ENCODE measurements at regions of chr15 and their contacts with region 1.

Region 1: GRCh38 chr15:78396976-78397375 is 41.0 kb upstream of the IREB2 start:
- DNase-seq: peak in 1 of 2 donors; percentile 33
- ATAC-seq: peak in 3 of 8 donors; percentile 22 to 74 (median 70)
- H3K4me3 ChIP-seq: no peak overlapping the region
- H3K27ac ChIP-seq: no peak overlapping the region
- H3K4me1 ChIP-seq: peaks cover 0 to 6% (median 0%) of the 10 kb centered on the region in 9 donors
- H3K27me3 ChIP-seq: peaks cover 0 to 26% (median 9%) of the 10 kb centered on the region in 7 donors
- CTCF ChIP-seq: peak in 5 of 9 donors; percentile 13 to 32 (median 24)

Region 2: GRCh38 chr15:78212546-78213424 is 184.2 kb before region 1 on chr15:
- intact Hi-C with region 1: no loop called
- DNase-seq: peak; percentile 58 to 66
- ATAC-seq: peak in 6 of 8 donors; percentile 71 to 85 (median 75)
- H3K4me3 ChIP-seq: no peak overlapping the region
- H3K27ac ChIP-seq: peak overlapping the region in 6 of 10 donors; percentile 10 to 57 (median 35)
- H3K4me1 ChIP-seq: peaks cover 2 to 59% (median 35%) of the 10 kb centered on the region in 9 donors
- H3K27me3 ChIP-seq: peaks cover 0 to 9% (median 0%) of the 10 kb centered on the region in 7 donors
- CTCF ChIP-seq: no peak

Region 3: GRCh38 chr15:78315686-78316282 is 81.2 kb before region 1 on chr15:
- intact Hi-C with region 1: no loop called
- DNase-seq: no peak
- ATAC-seq: peak in 1 of 8 donors; percentile 21
- H3K4me3 ChIP-seq: no peak overlapping the region
- H3K27ac ChIP-seq: no peak overlapping the region
- H3K4me1 ChIP-seq: peaks cover 0 to 5% (median 0%) of the 10 kb centered on the region in 9 donors
- H3K27me3 ChIP-seq: peaks cover 0 to 4% (median 0%) of the 10 kb centered on the region in 7 donors
- CTCF ChIP-seq: no peak

Region 4: DNA sequence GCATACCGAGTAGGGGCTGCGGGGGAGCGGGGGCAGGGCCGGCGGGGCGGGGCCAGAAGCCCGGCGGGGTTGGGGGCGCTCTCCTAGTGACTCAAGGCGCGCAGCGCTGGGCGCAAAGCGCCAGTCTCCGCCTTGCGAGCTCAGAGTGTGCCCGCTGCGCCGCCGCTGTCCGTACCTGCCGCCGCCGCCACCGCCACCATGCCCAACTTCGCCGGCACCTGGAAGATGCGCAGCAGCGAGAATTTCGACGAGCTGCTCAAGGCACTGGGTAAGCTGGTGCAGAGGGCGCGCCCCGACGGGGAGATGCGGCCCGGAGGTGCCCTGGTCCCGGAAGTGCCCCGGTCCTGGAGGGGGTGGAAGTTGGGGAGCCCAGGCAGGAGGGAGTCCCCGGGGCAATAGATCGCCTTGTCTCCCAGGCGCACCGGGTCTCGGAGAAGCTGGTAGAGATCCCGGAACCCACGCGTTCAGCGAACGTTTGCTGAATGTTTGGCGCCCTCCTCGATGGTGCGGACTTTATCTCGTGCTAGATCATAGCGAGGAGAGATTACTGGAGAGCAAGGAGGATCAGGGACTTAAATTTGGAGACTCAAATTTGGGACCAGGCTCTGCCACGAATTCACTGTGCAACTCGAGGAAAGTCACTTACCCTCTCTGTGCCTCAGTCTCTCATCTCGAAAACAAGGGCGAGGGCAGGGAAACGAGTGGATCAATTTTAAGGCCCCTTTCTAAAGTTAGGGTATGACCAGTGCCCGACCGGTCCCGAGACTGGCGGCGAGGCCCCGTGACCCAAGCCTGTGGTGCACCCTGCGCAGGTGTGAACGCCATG is 56.5 kb before region 1 on chr15 and contains the start of gene CRABP1:
- intact Hi-C with region 1: loop called in 1 of 10 experiments (anchors 10 kb)
- DNase-seq: no peak
- ATAC-seq: peak in 1 of 8 donors; percentile 33
- H3K4me3 ChIP-seq: peak within 1 kb of the TSS in 2 of 10 donors; percentile 20 to 23
- H3K27ac ChIP-seq: no peak within 1 kb of the TSS
- H3K4me1 ChIP-seq: peaks cover 0 to 18% (median 11%) of the 10 kb centered on the region in 9 donors
- H3K27me3 ChIP-seq: peaks cover 18 to 89% (median 74%) of the 10 kb centered on the region in 7 donors
- CTCF ChIP-seq: no peak
- total RNA-seq, gene CRABP1: not detected